Breast epithelium (tissue), 4 donors: ENCODE measurements at regions of chr4 and their contacts with region 1.

Region 1: DNA sequence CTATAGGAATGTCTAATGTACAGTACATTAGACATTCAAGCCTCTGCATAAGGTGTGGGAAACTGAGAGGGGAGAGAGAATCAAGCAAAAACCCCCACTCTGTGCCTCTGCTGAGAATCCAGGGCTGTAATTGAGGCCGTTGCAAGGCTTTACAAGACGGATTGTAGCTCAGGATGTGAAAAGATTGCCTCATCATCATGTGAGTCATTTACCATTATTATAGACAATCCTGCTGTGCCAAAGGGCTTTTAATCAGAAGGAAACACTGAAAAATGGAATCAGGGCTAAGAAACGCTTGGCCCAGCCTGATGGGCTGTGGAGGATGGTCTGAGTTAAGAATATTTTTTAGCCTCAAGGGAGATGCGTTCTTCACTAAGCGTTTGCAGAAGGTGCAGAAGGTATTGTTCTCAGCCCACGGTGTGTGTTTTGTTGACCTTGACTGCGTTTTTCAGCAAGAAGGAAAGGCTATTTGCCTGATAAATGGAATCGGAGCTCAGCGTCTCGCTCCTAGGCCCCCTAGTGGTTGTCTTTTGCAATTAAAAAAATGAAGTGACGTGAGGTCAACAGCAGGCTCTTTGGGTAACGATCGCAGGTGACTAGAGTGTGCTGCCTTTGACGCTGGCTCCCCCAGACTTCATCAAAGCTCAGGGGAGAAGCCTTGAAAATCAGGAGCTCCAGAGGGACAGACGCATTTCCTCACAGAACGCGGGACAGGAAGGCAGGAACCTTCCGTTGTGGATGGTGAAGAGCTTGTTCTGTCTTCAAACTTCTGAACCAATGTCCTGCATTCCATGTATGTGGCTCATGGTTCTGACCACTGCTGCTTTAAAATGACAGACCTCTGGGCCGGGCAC is 18.1 kb upstream of the CHRNA9 start:
- DNase-seq: peak; percentile 28 to 55
- H3K4me3 ChIP-seq: peak overlapping the region; percentile 32 to 59 (median 35)
- H3K27ac ChIP-seq: peak overlapping the region; percentile 88 to 90
- H3K4me1 ChIP-seq: no peaks in the 10 kb centered on the region
- H3K27me3 ChIP-seq: no peaks in the 10 kb centered on the region
- CTCF ChIP-seq: peak; percentile 81 to 85 (median 85)
- POLR2A ChIP-seq: no peak

Region 2: DNA sequence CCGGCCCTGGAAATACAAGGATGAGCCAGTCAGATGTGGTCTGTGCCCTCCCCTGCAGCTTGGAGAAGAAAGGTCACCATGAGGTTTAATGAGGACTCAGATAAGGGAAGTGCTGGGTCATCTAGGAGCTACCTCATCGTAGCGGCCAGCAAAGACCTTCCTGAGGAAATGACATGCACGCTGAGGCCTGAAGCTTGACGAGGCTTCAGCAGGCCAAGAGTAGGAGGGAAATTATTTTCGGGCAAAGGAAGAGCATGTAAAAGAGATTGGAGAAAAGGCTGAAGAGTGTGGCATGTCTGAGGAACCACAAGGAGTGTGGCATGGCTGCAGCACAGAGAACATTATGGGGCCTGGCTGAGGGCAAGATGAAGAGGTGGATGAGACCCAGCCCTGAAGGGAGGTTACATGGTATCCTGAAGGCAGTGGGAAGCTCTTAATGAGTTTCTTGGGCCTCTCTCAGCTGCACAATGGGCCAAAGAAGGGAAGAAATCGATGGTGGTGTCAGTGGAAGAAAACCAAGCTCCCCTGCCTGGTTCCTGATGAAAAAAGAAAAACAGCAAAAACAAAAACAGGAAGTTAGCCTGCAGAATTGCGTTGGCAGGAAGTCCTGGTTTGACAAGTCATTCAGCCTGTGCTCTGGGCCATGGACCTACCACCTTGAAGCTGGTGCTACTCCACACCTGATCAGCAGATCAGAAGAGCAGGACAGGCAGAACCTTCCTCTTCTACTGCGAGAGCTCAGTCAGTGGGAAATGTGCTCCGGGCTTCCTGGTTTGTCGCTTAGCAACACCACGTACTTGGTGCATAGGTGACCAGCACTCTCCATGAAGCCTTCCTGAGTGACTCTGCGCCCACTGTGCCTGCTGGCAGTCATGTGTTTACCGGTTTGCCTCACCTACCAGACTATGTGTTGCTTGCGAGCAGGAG is 1787.6 kb before region 1 on chr4:
- intact Hi-C with region 1: no loop called
- DNase-seq: no peak
- H3K4me3 ChIP-seq: no peak overlapping the region
- H3K27ac ChIP-seq: peak overlapping the region in 1 of 2 donors; percentile 10
- H3K4me1 ChIP-seq: no peaks in the 10 kb centered on the region
- H3K27me3 ChIP-seq: no peaks in the 10 kb centered on the region
- CTCF ChIP-seq: no peak
- POLR2A ChIP-seq: no peak

Region 3: DNA sequence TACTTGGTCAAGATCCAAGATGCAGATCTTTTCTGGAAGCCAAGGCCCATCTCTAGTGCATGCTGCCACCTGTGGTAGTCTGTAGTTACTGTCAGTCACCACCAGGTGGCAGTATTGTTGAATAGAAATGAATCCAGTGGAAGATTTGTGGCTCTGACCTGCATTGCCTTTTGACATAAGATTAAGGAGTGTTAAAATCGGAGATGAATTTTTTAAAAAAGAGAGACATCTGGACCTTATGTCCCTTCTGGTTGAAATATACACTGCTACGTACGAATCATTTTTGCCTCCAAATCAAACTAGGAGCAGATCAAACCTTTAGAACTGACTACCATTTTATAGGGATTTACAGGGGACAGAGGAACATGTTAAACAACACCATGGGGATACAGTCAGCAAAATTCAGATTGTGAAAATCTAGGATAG is 167.0 kb before region 1 on chr4:
- intact Hi-C with region 1: loop called (anchors 10 kb)
- DNase-seq: peak; percentile 59 to 68
- H3K4me3 ChIP-seq: no peak overlapping the region
- H3K27ac ChIP-seq: no peak overlapping the region
- H3K4me1 ChIP-seq: no peaks in the 10 kb centered on the region
- H3K27me3 ChIP-seq: no peaks in the 10 kb centered on the region
- CTCF ChIP-seq: peak; percentile 85 to 92 (median 88)
- POLR2A ChIP-seq: no peak

Region 4: GRCh38 chr4:40782876-40783275 is 465.9 kb after region 1 on chr4:
- intact Hi-C with region 1: no loop called
- DNase-seq: no peak
- H3K4me3 ChIP-seq: no peak overlapping the region
- H3K27ac ChIP-seq: no peak overlapping the region
- H3K4me1 ChIP-seq: no peaks in the 10 kb centered on the region
- H3K27me3 ChIP-seq: no peaks in the 10 kb centered on the region
- CTCF ChIP-seq: no peak
- POLR2A ChIP-seq: no peak